H1 (cell line): ENCODE measurements at regions of chr7 and their contacts with region 1.

Region 1: DNA sequence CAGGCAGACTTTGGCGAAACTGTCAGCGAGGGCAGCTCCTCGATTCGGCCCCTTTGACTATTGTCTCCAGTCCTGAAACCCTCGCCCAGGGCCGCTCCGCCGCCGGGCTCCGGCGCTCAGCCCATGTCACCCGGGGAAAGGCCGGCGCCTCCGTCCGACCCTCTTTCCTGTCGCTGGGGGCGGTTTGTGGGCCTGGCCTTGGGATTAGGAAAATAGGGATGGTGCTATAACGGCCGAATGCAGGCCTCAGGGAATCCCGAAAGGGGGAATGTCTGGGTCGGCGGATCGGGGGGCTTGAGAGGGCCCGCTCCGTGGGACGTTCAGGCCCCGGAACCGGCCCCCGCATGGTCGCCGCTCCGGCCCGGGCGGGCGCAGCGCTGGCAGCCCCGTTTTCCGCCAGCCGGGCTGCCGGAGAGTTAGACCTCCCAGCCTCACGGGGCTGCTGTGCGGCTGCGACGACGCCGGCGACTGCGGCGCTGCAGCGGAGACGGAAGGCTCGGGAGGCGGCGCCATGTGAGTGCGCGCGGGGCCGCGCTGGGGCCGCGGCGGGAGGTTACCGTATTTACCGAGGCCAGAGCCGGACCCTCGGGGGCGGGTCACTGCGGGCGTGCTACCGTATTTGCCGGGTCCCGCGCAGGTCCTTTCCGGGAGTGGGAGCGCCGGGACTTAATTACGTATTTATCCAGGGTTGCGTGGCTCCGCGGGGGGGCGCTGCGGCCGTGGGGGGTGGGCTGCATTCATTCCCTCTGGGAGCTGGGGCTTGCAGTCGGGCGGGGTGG is 25.9 kb downstream of the ZNF775 start:
- DNase-seq: peak in 1 of 2 experiments; percentile 88
- H3K4me3 ChIP-seq: peak overlapping the region; percentile 49 to 79 (median 61)
- H3K27ac ChIP-seq: peak overlapping the region; percentile 97
- H3K4me1 ChIP-seq: peaks cover 36 to 58% (median 45%) of the 10 kb centered on the region in 4 experiments
- H3K27me3 ChIP-seq: no peaks in the 10 kb centered on the region
- CTCF ChIP-seq: peak; percentile 1 to 20 (median 5); a peak in 2 of 4 replicates
- EP300 ChIP-seq: peak; percentile 1 to 79; a peak in 2 of 3 replicates
- POLR2A ChIP-seq: peak in 1 of 2 experiments; percentile 31
- RAD21 ChIP-seq: peak in 1 of 2 experiments; percentile 9; a peak in 2 of 4 replicates

Region 2: GRCh38 chr7:150340024-150340749 is 64.8 kb before region 1 on chr7:
- CTCF ChIA-PET with region 1: interaction called, 6 read pairs
- POLR2A ChIA-PET with region 1: interaction called, 35 read pairs
- DNase-seq: no peak
- H3K4me3 ChIP-seq: peak overlapping the region; percentile 84 to 94 (median 85)
- H3K27ac ChIP-seq: no peak overlapping the region
- H3K4me1 ChIP-seq: peaks cover 15 to 65% (median 38%) of the 10 kb centered on the region in 4 experiments
- H3K27me3 ChIP-seq: peaks cover 0 to 26% (median 20%) of the 10 kb centered on the region in 4 experiments; a peak in 6 of 7 replicates
- CTCF ChIP-seq: no peak
- EP300 ChIP-seq: no peak
- POLR2A ChIP-seq: no peak
- RAD21 ChIP-seq: no peak

Region 3: DNA sequence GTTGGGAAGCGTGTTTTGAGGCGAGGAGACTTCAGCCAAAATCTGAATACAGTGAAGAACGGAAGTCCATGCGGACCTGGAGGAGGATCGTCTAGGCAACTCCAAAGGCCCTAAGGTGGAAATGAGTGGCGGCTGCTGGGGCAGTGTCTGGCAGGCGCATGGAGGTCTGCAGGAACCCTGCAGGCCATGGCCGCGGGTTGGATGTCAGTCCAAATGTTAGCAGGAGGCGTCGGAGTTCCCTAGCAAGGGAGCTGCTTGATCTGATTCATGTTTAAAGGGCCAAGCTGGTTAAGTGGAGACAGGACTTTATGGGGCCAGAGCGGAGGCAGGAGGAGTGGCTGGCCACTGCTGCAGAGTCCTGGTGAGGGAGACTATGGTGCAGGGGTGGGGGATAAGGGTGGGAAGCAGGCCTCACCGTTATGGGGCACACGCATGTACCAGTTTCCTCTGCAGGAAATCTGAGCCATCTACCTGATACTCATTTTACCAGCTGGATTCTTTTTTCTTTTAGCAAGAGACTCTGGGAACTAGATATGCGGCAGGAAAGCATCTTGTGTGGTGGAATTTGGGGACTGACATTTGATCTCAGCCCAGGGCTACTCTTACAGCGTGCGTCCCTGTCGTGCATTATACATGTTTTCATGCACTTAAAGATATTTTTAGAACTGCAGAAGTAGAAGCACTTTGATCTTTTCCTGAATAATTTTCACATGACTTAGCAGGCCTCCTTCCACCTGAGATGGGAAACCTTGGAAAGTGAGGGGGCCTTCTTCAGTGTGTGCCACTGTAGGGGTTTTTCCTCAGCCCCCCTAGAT is 43.0 kb before region 1 on chr7:
- CTCF ChIA-PET with region 1: interaction called, 12 read pairs
- POLR2A ChIA-PET with region 1: interaction called, 9 read pairs
- DNase-seq: no peak
- H3K4me3 ChIP-seq: no peak overlapping the region
- H3K27ac ChIP-seq: no peak overlapping the region
- H3K4me1 ChIP-seq: peaks cover 14 to 23% (median 18%) of the 10 kb centered on the region in 4 experiments
- H3K27me3 ChIP-seq: no peaks in the 10 kb centered on the region; a peak in 1 of 7 replicates
- CTCF ChIP-seq: no peak
- EP300 ChIP-seq: no peak
- POLR2A ChIP-seq: no peak
- RAD21 ChIP-seq: no peak

Region 4: GRCh38 chr7:150388709-150389531 is 16.1 kb before region 1 on chr7:
- CTCF ChIA-PET with region 1: interaction called, 31 read pairs
- POLR2A ChIA-PET with region 1: interaction called, 170 read pairs
- DNase-seq: no peak
- H3K4me3 ChIP-seq: no peak overlapping the region
- H3K27ac ChIP-seq: no peak overlapping the region
- H3K4me1 ChIP-seq: peaks cover 19 to 29% (median 24%) of the 10 kb centered on the region in 4 experiments
- H3K27me3 ChIP-seq: no peaks in the 10 kb centered on the region
- CTCF ChIP-seq: peak; percentile 64 to 69 (median 68)
- EP300 ChIP-seq: no peak
- POLR2A ChIP-seq: no peak
- RAD21 ChIP-seq: peak; percentile 75 to 80